ENCODE measurements at regions of chr16 and their contacts with region 1.

Region 1: DNA sequence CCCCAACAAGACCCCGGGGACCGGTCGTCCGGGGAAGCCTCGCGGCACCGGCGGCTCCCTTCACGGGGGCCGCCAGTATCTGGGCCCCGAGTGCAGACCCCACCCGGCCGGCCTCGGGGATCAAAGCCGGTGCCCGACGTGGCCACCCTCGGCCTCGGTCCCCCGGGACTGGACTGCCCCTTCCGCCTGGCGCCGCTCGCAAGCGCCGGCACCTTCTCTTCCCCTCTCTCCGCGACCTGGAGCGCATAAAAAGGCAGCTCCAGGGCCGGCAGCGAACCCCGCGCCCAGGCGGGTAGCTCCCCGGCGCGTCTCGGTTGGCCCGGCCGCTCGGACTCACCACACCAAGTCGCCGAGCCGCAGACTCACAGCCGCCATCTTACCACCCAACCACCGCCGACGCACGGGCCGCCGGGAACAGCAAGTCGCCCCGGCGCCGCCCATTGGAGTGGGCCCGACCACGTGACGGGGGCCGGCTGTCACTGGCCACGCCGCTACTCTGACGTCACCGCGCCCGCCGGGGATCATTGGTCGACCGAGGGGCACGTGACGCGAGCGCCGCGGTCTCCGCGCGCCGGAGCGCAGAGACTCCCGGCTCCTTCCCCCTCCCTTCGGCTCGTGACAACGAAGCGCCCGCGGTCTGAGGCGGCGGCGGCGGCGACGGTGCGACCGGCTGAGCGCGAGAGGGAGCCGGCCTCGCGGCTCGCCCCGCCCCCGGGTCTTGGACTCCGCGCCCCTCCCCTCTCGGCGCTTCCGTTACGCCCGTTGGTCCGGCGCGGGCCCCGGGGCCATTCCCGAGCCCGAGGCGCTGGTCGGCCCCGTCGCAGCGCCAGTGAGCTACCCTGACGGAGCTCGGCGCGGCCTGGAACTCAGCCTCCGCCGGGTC is at the starts of genes GLYR1 and UBN1:
- DNase-seq: peak; percentile 99 to 100
- ATAC-seq: peak; percentile 85 to 95 (median 89)
- H3K4me3 ChIP-seq: peak within 1 kb of the TSS; percentile 76
- H3K4me3 Mint-ChIP-seq: peak within 1 kb of the TSS; percentile 98
- H3K27ac ChIP-seq: peak within 1 kb of the TSS; percentile 96
- H3K27ac Mint-ChIP-seq: peak within 1 kb of the TSS; percentile 93 to 95
- H3K4me1 ChIP-seq: peaks cover 24% of the 10 kb centered on the region
- H3K4me1 Mint-ChIP-seq: peaks cover 50% of the 10 kb centered on the region in 2 donors
- H3K27me3 ChIP-seq: no peaks in the 10 kb centered on the region
- H3K27me3 Mint-ChIP-seq: no peaks in the 10 kb centered on the region
- CTCF ChIP-seq: no peak
- total RNA-seq, gene GLYR1: 112 to 129 (median 125) TPM
- total RNA-seq, gene UBN1: 70.5 to 81.6 (median 79.9) TPM

Region 2: GRCh38 chr16:4766874-4767628 is 80.1 kb before region 1 on chr16 and contains the start of gene ZNF500:
- intact Hi-C with region 1: loop called (anchors 5 kb)
- DNase-seq: peak; percentile 95 to 96
- ATAC-seq: peak; percentile 93 to 97 (median 97)
- H3K4me3 ChIP-seq: peak within 1 kb of the TSS; percentile 69
- H3K4me3 Mint-ChIP-seq: peak within 1 kb of the TSS; percentile 92
- H3K27ac ChIP-seq: peak within 1 kb of the TSS; percentile 73
- H3K27ac Mint-ChIP-seq: peak within 1 kb of the TSS; percentile 86 to 88
- H3K4me1 ChIP-seq: peaks cover 38% of the 10 kb centered on the region
- H3K4me1 Mint-ChIP-seq: peaks cover 30 to 34% of the 10 kb centered on the region in 2 donors
- H3K27me3 ChIP-seq: no peaks in the 10 kb centered on the region
- H3K27me3 Mint-ChIP-seq: no peaks in the 10 kb centered on the region
- CTCF ChIP-seq: no peak
- total RNA-seq, gene ZNF500: 11.4 to 20.3 (median 13.0) TPM

Region 3: GRCh38 chr16:4802659-4803287 is 44.4 kb before region 1 on chr16:
- intact Hi-C with region 1: loop called (anchors 2 kb)
- DNase-seq: peak; percentile 91
- ATAC-seq: peak; percentile 93 to 97 (median 94)
- H3K4me3 ChIP-seq: peak overlapping the region; percentile 35
- H3K4me3 Mint-ChIP-seq: peak overlapping the region; percentile 82
- H3K27ac ChIP-seq: peak overlapping the region; percentile 58
- H3K27ac Mint-ChIP-seq: peak overlapping the region; percentile 51 to 82
- H3K4me1 ChIP-seq: peaks cover 27% of the 10 kb centered on the region
- H3K4me1 Mint-ChIP-seq: peaks cover 0 to 10% of the 10 kb centered on the region in 2 donors
- H3K27me3 ChIP-seq: no peaks in the 10 kb centered on the region
- H3K27me3 Mint-ChIP-seq: no peaks in the 10 kb centered on the region
- CTCF ChIP-seq: no peak